Lower leg skin (tissue), 4 donors: ENCODE measurements at regions of chr19 and their contacts with region 1.

Region 1: DNA sequence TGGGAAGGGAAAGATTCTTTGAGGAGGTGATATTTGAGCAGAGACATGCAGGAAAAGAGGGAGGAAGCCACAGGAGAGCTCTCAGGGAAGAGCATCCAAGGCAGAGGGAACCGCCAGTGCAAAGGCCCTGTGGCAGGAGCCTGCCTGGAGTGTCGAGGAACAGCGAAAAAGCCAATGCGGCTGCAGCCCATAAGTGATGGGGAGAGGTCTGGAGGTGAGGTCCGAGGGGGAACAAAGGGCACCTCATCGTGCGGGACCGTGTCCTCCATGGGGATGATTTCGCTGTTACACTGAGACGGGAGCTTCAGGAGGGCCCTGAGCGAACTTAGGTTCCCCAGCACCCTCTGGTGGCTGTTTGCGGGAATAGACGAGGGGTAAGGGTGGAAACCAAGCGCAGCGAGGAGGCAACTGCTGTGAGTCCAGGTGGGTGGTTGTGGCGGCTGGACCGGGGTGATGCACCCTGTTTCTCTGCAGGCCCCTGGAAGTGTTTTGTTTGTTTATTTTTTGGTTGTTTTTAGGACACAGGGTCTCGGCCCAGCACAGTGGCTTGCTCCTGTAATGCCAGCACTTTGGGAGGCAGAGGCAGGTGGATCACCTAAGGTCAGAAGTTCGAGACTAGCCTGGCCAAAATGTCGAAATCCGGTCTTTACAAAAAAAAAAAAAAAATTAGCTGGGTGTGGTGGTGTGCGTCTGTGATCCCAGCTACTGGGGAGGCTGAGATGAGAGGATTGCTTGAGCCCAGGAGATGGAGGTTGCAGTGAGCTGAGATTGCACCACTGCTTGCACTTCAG is 5.9 kb upstream of the EHD2 start:
- DNase-seq: peak; percentile 55 to 93
- H3K4me3 ChIP-seq: no peak overlapping the region
- CTCF ChIP-seq: peak in 1 of 3 donors; percentile 85
- POLR2A ChIP-seq: no peak

Region 2: DNA sequence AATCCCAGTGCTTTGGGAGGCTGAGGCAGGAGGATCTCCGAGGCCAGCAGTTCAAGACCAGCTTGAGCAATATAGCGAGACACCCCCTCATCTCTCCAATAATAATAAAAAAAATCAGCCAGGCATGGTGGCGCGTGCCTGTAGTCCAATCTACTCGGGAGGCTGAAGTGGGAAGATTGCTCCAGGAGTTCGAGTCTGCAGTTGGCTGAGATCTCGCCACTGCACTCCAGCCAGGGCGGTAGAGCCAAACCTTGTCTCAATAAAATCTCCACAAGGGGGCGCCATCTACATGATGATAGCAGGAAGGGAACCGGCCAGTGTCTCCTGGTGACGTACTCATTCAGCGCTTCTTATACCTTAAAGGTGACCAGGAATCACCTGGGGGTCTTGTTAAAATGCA is 411.3 kb before region 1 on chr19:
- intact Hi-C with region 1: loop called (anchors 10 kb)
- DNase-seq: peak; percentile 82 to 92
- H3K4me3 ChIP-seq: no peak overlapping the region
- CTCF ChIP-seq: peak in 1 of 3 donors; percentile 63
- POLR2A ChIP-seq: no peak